OCI-LY7 (cell line): ENCODE measurements at regions of chr16 and their contacts with region 1.

Region 1: DNA sequence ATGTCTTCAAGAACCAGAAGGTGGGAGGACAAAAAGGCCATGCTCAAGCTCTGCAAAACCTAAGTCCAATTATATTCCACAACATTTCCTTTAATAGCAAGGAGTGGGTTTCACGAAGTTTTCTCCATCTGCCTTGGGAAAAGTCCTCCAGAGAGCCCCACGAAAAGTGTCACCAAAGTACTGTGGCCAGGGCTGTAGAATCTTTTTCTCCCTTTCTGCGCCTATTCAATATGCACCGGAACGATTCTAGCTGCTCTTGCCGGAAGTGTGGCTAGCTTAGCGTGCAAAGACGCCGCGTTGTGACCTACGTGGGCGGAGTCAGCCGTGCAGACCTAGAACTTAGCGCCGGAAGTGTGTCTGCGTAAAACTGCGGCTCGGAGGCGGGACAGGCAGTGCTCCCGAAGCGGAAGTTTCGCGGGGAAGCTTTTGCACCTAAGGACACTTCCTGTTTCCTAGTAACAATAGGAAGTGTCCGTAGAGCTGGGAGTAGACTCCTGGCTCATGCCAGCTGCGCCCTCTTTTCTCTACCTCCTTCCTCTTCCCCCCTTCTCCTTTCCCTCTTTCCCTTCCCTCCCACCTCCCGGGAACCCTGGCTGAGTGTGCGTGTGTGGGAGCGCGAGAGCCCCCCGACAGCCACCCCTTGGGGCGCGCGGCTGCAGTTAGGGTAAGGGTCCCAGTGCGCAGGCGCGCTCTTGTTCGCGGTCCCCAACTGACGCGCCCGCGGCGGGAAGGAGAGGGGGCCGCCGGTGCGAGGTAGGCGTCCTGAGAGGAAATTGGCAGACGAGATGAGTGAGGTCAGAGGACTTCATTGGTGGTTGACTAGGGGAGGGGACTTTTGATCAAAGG is at the starts of genes ZNF646 and ZNF668:
- DNase-seq: peak; percentile 100
- H3K4me3 ChIP-seq: peak within 1 kb of the TSS; percentile 88
- H3K27ac ChIP-seq: peak within 1 kb of the TSS; percentile 84
- H3K4me1 ChIP-seq: peaks cover 15% of the 10 kb centered on the region
- CTCF ChIP-seq: no peak
- total RNA-seq, gene ZNF646: 25.4 and 30.1 TPM in 2 replicates
- total RNA-seq, gene ZNF668: 7.8 and 18.7 TPM in 2 replicates

Region 2: DNA sequence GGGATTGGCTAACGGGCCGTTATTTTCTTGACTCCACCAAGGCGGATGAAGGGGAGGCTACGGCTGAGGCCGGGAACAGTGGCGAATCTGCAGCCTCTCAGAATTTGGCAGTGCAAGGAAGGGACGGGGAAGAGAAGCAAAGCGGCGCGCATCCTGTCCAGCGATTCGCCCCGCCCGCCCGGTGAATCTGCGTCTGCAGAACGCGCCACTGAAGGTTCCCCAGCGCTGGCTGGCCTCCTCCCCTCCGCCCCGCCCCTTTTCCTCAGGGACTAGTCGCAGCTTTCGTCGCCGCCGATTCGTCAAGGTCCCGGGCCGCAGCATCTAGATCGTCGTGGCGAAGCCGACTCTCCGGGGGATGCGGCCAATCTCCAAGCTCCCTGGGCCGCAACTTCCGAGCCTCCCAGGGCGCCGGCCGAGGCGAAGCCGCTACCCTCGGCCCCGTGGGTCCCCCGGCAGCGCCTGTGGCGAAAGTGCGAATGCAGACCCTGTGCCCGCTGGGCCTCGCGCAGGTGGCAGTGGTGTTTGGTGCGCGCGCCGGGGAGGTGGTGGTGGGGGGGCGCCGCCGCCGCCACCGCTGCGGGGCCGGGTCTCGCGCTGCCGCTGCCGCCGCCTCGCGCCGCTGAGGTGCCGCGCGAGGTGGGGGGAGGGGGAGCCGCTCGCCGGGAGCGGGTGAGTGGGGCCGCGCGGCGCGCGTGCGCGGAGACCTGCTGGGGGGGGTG is 116.6 kb before region 1 on chr16 and contains the start of gene SETD1A:
- CTCF ChIA-PET with region 1: no interaction called
- POLR2A ChIA-PET with region 1: no interaction called
- intact Hi-C with region 1: loop called (anchors 5 kb)
- DNase-seq: peak; percentile 99
- H3K4me3 ChIP-seq: peak within 1 kb of the TSS; percentile 75
- H3K27ac ChIP-seq: peak within 1 kb of the TSS; percentile 90
- H3K4me1 ChIP-seq: peaks cover 35% of the 10 kb centered on the region
- CTCF ChIP-seq: no peak
- total RNA-seq, gene SETD1A: 8.6 and 9.0 TPM in 2 replicates

Region 3: GRCh38 chr16:30997000-30997886 is 76.9 kb before region 1 on chr16:
- CTCF ChIA-PET with region 1: no interaction called
- POLR2A ChIA-PET with region 1: no interaction called
- intact Hi-C with region 1: loop called (anchors 5 kb)
- DNase-seq: peak; percentile 79
- H3K4me3 ChIP-seq: peak overlapping the region; percentile 72
- H3K27ac ChIP-seq: no peak overlapping the region
- H3K4me1 ChIP-seq: peaks cover 10% of the 10 kb centered on the region
- CTCF ChIP-seq: no peak

Region 4: DNA sequence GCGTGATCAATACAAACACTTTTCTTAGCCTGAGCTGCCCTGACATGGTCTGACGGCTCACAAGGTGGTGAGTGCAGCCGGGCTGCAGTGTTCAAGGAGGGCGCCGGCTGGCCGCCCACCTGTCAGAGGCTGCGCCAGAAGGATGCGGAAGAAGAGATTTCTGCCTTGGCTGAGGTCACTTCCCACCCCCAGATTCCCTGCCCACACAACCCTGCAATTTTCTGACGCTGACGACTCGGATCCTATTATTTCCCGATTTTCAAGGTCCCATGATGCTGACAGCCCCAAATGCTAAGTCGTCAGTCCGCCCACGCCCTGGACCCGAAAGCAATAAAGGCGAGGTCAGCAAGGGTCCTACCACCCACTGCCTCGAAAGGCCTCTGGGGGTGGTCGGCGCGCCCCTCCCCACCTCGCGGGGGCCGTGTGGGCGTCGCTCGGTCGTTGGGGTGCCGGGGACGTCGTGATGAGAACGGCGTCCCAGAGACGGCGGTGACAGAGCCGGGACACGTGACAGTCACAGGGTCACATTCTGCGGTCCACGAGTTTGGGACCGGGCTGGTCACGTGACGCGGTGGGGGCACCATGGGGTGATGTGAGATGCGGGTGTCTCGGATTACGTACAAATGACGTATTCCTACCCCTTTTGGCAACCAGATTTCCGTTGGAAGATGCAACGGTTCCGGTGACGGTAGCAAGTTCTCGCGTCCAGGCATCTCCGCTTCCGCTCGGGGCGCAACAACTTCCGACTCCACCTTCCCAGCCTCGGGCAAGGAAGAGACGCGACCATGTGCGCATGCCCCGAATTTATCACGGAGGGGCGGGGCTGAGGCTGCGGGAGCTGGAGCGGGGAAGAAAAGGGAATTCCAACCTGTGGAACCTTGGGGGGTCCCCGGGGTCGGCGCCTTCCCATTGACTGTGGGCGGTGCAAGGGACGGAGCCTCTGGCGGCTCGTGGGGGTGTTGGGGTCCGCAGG is 41.2 kb before region 1 on chr16 and contains the start of gene STX4:
- CTCF ChIA-PET with region 1: no interaction called
- POLR2A ChIA-PET with region 1: no interaction called
- intact Hi-C with region 1: loop called (anchors 1 kb)
- DNase-seq: peak; percentile 95
- H3K4me3 ChIP-seq: peak within 1 kb of the TSS; percentile 98
- H3K27ac ChIP-seq: peak within 1 kb of the TSS; percentile 59
- H3K4me1 ChIP-seq: peaks cover 18% of the 10 kb centered on the region
- CTCF ChIP-seq: no peak
- total RNA-seq, gene STX4: 14.6 and 16.6 TPM in 2 replicates

Region 5: DNA sequence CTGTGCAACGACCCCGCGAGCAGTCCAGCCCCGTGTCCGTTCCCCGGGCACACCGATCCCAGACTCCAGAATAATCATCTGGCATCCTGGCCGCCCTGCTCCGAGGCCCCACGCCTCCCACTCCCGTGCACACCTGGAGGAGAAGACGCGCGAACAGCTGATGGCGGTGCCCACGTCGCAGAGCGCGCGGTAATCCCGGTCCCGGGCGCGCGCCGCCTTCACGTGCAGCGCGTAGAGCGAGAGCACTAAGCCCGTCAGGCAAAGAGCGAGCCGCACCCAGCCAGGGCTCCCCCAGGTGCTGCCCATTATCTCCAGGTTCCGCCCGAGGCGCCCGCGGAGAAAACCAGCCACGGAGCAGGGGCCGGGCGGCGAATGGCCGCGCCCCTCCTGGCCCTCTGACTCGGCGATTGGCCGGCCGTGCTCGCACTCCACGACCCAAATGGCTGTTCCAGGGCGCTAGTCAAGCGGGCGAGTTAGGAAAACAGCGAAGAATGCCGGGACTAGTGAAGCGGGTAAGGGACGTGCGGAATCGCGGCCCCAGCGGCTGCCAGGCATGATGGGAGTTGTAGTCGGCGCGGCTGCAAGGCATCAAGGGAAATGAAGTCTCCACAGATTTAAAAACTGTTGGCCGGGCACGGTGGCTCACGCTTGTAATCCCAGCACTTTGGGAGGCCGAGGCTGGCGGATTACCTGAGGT is 20.4 kb after region 1 on chr16 and contains the start of gene VKORC1:
- CTCF ChIA-PET with region 1: no interaction called
- POLR2A ChIA-PET with region 1: interaction called, 7 read pairs
- intact Hi-C with region 1: loop called (anchors 1 kb)
- DNase-seq: peak; percentile 92
- H3K4me3 ChIP-seq: peak within 1 kb of the TSS; percentile 86
- H3K27ac ChIP-seq: peak within 1 kb of the TSS; percentile 71
- H3K4me1 ChIP-seq: peaks cover 18% of the 10 kb centered on the region
- CTCF ChIP-seq: no peak
- total RNA-seq, gene VKORC1: 68.8 and 69.3 TPM in 2 replicates

Region 6: GRCh38 chr16:31117391-31118197 is 43.4 kb after region 1 on chr16 and contains the start of gene KAT8:
- CTCF ChIA-PET with region 1: interaction called, 8 read pairs
- POLR2A ChIA-PET with region 1: interaction called, 5 read pairs
- intact Hi-C with region 1: loop called (anchors 1 kb)
- DNase-seq: peak; percentile 99
- H3K4me3 ChIP-seq: peak within 1 kb of the TSS; percentile 81
- H3K27ac ChIP-seq: peak within 1 kb of the TSS; percentile 65
- H3K4me1 ChIP-seq: peaks cover 8% of the 10 kb centered on the region
- CTCF ChIP-seq: no peak
- total RNA-seq, gene KAT8: 86.9 and 89.1 TPM in 2 replicates